ENCODE measurements at regions of chr7 and their contacts with region 1.

Region 1: DNA sequence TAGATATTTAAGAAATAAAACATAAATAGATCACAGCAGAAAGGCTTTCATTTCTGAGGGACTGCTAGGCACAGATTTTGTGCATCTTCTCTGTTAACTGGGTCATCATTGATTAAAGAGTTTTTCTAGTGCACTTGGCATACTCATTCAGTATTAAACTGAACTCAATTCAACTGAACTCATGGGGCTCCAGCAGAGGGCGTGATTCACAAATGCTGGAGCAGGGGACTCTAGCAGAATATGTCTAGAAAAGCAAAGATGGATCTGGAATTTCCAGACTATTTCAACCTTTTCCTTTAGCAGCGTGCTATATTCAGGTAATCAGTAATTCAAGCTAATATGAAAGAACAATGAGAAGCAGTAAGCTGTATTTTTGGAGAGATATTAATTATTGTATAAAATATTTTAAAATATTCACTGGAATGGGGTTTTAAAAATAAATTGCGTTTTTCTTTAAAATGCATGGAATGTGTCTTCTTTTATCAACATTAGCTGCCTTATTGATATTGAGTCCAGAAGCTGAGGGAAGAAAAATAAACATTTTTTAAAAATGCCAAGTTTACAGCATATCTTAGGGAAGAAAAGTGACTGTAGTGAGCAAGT is 296.8 kb upstream of the CACNA2D1 start:
- DNase-seq: peak; percentile 52
- H3K4me3 Mint-ChIP-seq: no peak overlapping the region
- H3K27ac Mint-ChIP-seq: no peak overlapping the region
- H3K4me1 Mint-ChIP-seq: no peaks in the 10 kb centered on the region
- H3K27me3 Mint-ChIP-seq: no peaks in the 10 kb centered on the region
- CTCF ChIP-seq: peak; percentile 48

Region 2: DNA sequence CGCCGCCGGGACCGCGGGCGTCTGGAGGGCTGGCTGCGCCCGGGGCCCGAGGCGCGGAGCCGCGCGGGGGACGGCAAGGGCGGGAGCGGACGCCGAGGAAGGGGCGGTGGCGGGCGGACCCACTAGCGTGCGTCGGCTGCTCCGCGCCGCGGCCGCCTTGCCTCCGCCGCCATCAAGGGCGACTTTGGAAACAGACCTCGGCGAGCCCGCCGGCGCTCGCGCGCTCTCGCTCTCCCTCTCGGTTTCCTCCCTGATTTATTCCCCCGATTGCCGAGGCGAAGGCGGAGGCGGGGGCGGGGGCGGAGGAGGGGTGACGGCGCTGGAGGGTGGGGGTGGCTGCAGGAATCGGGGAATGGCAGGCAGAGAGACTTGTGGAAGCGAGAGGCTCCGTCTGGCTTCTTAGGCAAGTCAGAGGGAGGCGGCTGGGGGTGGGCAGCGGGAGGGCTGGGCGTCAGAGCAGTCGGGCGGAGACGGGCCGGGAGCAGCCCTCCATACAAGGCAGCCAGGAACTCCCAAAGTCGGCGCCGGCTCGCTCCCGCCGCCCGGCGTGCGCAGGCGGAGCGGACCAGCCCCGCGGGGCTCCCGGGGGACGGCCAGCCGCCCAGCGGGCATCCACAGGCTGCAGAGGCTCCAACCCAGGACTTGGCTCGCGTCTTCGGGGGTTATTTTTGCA is 296.7 kb before region 1 on chr7 and contains the start of gene CACNA2D1:
- CTCF ChIA-PET with region 1: no interaction called
- intact Hi-C with region 1: no loop called
- DNase-seq: peak; percentile 44
- H3K4me3 Mint-ChIP-seq: peak within 1 kb of the TSS; percentile 88
- H3K27ac Mint-ChIP-seq: peak within 1 kb of the TSS; percentile 70
- H3K4me1 Mint-ChIP-seq: no peaks in the 10 kb centered on the region
- H3K27me3 Mint-ChIP-seq: no peaks in the 10 kb centered on the region
- CTCF ChIP-seq: no peak
- total RNA-seq, gene CACNA2D1: 10.1 and 10.4 TPM in 2 replicates

Region 3: DNA sequence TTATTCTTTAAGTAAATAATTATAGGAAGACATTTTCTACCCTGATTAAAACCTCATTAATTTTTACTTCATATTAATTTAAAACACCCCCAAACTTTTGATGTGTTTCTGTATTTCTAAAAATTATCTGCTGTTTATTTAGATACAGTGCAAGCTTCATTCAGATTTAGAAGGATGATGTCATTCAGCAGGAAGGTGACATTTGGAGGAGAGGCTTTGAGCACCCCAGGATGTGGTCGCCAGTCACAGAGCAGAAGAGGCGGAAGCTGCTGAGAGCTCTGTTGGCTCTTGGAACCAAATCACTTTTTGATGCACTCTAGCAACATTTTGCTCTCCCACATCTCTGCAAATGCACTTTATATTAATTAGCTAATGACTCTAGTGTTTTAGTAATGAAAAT is 62.9 kb before region 1 on chr7:
- CTCF ChIA-PET with region 1: no interaction called
- intact Hi-C with region 1: no loop called
- DNase-seq: no peak
- H3K4me3 Mint-ChIP-seq: no peak overlapping the region
- H3K27ac Mint-ChIP-seq: no peak overlapping the region
- H3K4me1 Mint-ChIP-seq: no peaks in the 10 kb centered on the region
- H3K27me3 Mint-ChIP-seq: no peaks in the 10 kb centered on the region
- CTCF ChIP-seq: no peak

Region 4: DNA sequence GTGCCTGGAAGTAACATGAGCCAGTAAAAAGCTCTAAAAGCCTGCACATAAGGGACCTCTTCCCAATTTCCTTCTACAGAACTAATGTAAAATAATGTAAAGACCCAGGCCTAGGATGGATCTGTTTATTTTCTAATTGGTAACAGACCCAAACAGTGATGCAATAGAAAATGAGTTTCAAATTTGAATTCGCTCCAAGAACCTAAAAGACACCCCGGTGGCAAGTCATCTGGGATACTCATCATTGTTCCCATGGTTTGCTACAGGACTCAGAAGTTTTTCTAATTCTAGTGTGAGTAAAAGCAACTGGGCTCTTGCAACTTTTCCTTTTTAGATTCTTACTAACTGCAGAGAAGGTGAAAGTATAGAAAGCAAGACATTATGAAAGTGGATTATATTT is 25.5 kb before region 1 on chr7:
- CTCF ChIA-PET with region 1: no interaction called
- intact Hi-C with region 1: no loop called
- DNase-seq: no peak
- H3K4me3 Mint-ChIP-seq: no peak overlapping the region
- H3K27ac Mint-ChIP-seq: no peak overlapping the region
- H3K4me1 Mint-ChIP-seq: peaks cover 8% of the 10 kb centered on the region
- H3K27me3 Mint-ChIP-seq: no peaks in the 10 kb centered on the region
- CTCF ChIP-seq: no peak

Region 5: GRCh38 chr7:83271212-83272099 is 531.1 kb after region 1 on chr7:
- CTCF ChIA-PET with region 1: no interaction called
- intact Hi-C with region 1: loop called (anchors 1 kb)
- DNase-seq: no peak
- H3K4me3 Mint-ChIP-seq: no peak overlapping the region
- H3K27ac Mint-ChIP-seq: no peak overlapping the region
- H3K4me1 Mint-ChIP-seq: peaks cover 18% of the 10 kb centered on the region
- H3K27me3 Mint-ChIP-seq: no peaks in the 10 kb centered on the region
- CTCF ChIP-seq: no peak

Region 6: DNA sequence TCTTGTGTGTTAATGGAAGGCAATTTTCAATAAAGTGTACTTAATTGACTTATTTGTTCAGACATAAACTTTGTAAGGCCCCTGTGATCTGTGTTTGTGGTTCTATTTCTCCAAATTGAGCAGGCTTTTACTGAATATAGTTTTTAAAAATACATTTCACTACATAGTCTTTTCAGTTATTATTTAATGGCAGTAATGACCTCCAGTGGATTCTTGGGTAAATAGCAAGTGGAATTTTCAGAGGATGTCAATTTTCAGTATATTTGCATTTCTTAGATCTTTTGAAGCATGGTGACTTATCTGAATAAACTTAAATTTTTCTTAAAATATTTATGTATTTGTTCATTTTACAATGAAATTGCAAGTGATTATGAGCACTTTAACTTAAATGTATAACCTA is 625.4 kb after region 1 on chr7:
- CTCF ChIA-PET with region 1: no interaction called
- intact Hi-C with region 1: loop called (anchors 2 kb)
- DNase-seq: no peak
- H3K4me3 Mint-ChIP-seq: no peak overlapping the region
- H3K27ac Mint-ChIP-seq: no peak overlapping the region
- H3K4me1 Mint-ChIP-seq: no peaks in the 10 kb centered on the region
- H3K27me3 Mint-ChIP-seq: no peaks in the 10 kb centered on the region
- CTCF ChIP-seq: no peak